ENCODE measurements at regions of chr11 and their contacts with region 1.

Region 1: DNA sequence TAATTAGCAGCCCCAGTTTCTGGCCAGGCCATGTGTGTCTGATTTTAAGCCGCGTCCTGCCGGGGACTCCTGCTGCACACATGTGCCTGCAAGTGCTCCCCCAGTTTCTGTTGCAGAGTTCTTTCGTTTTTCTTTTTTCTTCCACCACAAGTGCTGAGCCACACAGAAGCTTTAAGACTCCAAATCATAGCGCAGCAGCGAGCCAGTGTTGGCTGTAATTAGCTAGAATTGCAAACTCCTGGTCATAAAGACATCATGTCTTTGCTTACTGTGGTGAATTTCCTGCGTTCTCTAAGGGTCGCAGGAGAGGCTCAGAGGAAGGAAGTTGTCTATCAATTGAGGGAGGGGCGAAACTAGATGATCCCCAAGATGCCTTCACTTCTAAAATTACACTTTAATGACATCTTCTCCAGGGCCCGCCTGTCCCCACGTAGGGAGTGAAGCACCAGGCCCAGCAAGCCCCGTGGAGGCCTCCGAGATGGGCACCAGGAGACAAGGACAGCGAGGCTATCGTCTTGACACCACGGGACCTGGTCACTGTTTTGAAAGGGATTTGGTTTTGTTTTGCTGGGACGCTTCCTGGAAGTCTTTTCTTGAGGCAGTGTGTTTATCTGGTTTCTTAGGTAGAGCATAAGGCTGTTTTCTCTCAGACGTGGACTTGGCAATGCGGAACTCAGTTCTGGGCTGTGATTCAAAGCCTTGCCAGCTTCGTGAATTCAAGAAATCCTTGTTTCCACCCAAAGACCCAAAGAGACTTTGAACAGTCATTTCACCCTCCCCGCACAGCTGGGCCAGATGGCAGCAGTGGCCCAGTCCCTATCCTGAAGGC is 71.8 kb downstream of the UBASH3B start:
- DNase-seq: peak in 1 of 3 donors; percentile 50
- H3K4me3 ChIP-seq: peak overlapping the region in 5 of 7 experiments; percentile 28 to 49 (median 32)
- H3K27ac ChIP-seq: peak overlapping the region in 1 of 2 experiments; percentile 3
- H3K4me1 ChIP-seq: peaks cover 16 to 59% (median 44%) of the 10 kb centered on the region in 4 experiments
- H3K27me3 ChIP-seq: no peaks in the 10 kb centered on the region

Region 2: DNA sequence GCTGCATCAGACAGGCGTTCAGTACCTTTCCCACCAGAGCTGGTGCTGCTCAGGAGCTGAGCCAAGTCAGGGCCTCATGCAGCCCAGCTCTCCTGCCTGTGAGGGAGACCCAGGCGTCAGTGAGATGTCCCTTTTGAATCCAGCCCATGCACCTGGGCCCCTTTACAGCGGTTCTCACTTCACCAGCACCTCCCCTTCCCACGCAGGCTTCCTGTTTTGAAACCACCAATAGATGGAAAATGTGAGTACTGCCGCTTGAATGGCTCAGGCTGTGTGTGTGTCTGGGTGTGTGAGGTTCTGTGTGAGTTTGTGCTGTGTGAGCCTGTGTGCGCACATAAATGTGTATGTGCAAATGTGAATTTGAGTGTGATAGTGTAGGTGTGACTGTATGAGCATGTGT is 16.6 kb after region 1 on chr11:
- CTCF ChIA-PET with region 1: interaction called, 18 read pairs
- POLR2A ChIA-PET with region 1: no interaction called
- DNase-seq: peak; percentile 85 to 99 (median 98)
- H3K4me3 ChIP-seq: peak overlapping the region in 3 of 7 experiments; percentile 15 to 40 (median 37)
- H3K27ac ChIP-seq: peak overlapping the region; percentile 13 to 47
- H3K4me1 ChIP-seq: peaks cover 26 to 88% (median 59%) of the 10 kb centered on the region in 4 experiments
- H3K27me3 ChIP-seq: no peaks in the 10 kb centered on the region

Measured in common myeloid progenitor, CD34-positive (primary cell).